Activated T-helper 1 cell treated with anti-CD3 and anti-CD28 coated beads, Interleukin-12 subunit alpha, Interleukin-12 subunit beta, Interleukin-2, Interleukin-4 antibody, amounts not matched to agents 30 ng/mL and 10 ng/mL and 1 ng/mL, durations not matched to agents 14 hours and 24 hours and 36 hours (primary cell): ENCODE measurements at regions of chr14 and their contacts with region 1.

Region 1: GRCh38 chr14:56129933-56130332 is 11.7 kb downstream of the PELI2 start:
- DNase-seq: no peak
- H3K4me3 Mint-ChIP-seq: no peak overlapping the region
- H3K27ac Mint-ChIP-seq: no peak overlapping the region
- H3K4me1 Mint-ChIP-seq: peaks cover 19% of the 10 kb centered on the region
- H3K27me3 Mint-ChIP-seq: peaks cover under 1% of the 10 kb centered on the region

Region 2: GRCh38 chr14:55665067-55665675 is 464.8 kb before region 1 on chr14:
- intact Hi-C with region 1: no loop called
- DNase-seq: no peak
- H3K4me3 Mint-ChIP-seq: no peak overlapping the region
- H3K27ac Mint-ChIP-seq: no peak overlapping the region
- H3K4me1 Mint-ChIP-seq: peaks cover 19% of the 10 kb centered on the region
- H3K27me3 Mint-ChIP-seq: no peaks in the 10 kb centered on the region

Region 3: DNA sequence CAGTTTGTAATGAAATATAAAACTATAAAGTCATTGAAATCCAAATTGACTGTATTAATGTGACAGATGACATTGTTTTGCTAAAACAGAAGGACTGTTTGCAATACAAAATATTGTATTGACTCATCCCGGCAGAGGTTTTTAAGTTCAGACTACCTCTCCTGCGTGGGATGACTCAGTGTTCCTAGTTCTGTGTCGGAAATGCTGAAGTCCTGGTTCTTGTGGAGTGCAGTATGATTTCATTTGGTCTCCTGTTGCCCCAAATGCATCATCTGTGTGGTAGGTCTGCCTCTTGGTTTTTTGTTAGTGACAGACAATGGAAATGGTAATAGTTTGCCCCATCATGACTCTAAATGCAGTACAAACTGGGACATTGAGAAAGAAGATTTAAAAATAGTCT is 16.0 kb after region 1 on chr14:
- intact Hi-C with region 1: loop called (anchors 2 kb)
- DNase-seq: no peak
- H3K4me3 Mint-ChIP-seq: no peak overlapping the region
- H3K27ac Mint-ChIP-seq: peak overlapping the region; percentile 9
- H3K4me1 Mint-ChIP-seq: peaks cover 34% of the 10 kb centered on the region
- H3K27me3 Mint-ChIP-seq: no peaks in the 10 kb centered on the region